A673 (cell line): ENCODE measurements at regions of chr7 and their contacts with region 1.

Region 1: GRCh38 chr7:99040104-99040958 is 103.6 kb downstream of the SMURF1 start:
- DNase-seq: peak; percentile 89
- H3K4me3 ChIP-seq: no peak overlapping the region
- H3K27ac ChIP-seq: no peak overlapping the region
- H3K4me1 ChIP-seq: peaks cover 13% of the 10 kb centered on the region
- H3K27me3 ChIP-seq: no peaks in the 10 kb centered on the region
- CTCF ChIP-seq: peak; percentile 78

Region 2: DNA sequence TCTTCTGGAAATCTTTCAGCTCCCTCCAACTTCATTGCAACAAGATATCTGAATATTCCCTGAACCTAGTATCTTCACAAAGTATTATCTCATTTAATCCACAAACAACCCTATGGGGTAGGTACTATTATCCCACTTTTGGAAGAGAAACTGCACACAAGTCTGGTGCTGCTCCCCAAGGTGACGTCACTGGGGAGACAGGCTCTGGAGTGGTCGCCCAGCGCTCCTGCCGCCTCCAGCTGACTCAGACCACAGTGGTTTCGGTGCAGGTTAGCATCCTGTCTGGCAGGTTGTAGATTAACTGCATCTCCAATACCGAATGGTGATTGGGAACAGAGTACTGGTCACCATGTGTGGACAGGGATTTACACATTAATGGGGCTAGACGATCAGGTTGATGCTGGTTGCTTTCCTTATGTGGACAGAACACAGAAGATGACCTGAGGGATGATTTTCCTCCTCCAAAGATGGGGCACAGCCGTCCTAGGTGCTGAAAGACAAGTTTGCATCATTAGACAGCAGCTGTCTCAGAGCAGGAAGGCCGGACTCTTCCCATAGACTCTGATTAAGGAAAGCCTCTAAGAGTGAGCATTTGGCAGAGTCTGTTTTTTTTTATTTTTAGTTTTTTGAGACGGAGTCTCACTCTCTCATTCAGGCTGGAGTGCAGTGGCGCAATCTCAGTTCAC is 33.4 kb before region 1 on chr7:
- CTCF ChIA-PET with region 1: no interaction called
- POLR2A ChIA-PET with region 1: interaction called, 10 read pairs
- intact Hi-C with region 1: no loop called
- DNase-seq: no peak
- H3K4me3 ChIP-seq: no peak overlapping the region
- H3K27ac ChIP-seq: no peak overlapping the region
- H3K4me1 ChIP-seq: no peaks in the 10 kb centered on the region
- H3K27me3 ChIP-seq: no peaks in the 10 kb centered on the region
- CTCF ChIP-seq: no peak

Region 3: GRCh38 chr7:99312316-99313203 is 272.2 kb after region 1 on chr7:
- CTCF ChIA-PET with region 1: interaction called, 6 read pairs
- POLR2A ChIA-PET with region 1: no interaction called
- intact Hi-C with region 1: loop called (anchors 1 kb)
- DNase-seq: peak; percentile 79
- H3K4me3 ChIP-seq: no peak overlapping the region
- H3K27ac ChIP-seq: no peak overlapping the region
- H3K4me1 ChIP-seq: no peaks in the 10 kb centered on the region
- H3K27me3 ChIP-seq: no peaks in the 10 kb centered on the region
- CTCF ChIP-seq: peak; percentile 90